Calu3 (cell line): ENCODE measurements at regions of chr9 and their contacts with region 1.

Region 1: GRCh38 chr9:132169672-132170392 is 8.0 kb downstream of the NTNG2 start:
- DNase-seq: peak; percentile 54
- H3K4me3 Mint-ChIP-seq: no peak overlapping the region
- H3K27ac Mint-ChIP-seq: no peak overlapping the region
- H3K4me1 Mint-ChIP-seq: no peaks in the 10 kb centered on the region
- H3K27me3 Mint-ChIP-seq: peaks cover 97% of the 10 kb centered on the region
- CTCF ChIP-seq: peak; percentile 82

Region 2: DNA sequence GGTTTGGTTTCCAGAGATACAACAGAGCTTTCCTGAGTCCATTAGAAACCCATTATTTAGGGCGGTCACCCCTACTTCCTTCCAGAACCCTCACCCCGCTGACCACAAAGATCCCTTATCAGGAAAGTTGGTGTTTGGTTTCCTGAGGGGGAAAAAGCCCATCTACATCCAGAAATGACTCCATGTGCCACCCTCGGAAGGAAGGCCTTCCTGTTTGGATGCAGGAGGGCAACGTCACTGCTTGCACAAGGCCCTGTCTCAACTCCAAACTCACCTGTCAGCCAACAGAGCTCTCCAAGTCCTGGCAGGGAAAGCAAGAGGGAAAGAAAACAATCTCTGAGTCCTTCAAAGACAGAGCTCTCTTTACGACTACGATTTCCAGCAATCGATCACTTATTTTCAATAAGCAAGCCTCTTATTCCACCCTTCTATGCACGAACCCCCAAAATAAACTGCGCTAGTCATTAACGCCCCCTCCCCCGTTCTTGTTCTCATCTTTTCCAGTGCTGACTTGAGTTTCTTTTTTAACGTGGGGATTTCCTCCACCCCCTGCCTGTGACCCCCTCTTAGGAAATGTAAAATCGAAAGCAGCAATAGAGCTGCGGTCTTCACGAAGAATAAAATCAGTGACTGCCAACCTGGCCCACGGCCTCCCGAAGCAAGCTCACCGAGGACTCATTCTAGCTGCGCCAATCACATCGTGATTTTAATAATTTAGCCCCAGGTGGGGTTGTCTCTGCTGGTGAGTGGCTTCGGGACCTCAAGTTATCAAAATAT is 43.7 kb before region 1 on chr9:
- CTCF ChIA-PET with region 1: no interaction called
- intact Hi-C with region 1: no loop called
- DNase-seq: no peak
- H3K4me3 Mint-ChIP-seq: no peak overlapping the region
- H3K27ac Mint-ChIP-seq: no peak overlapping the region
- H3K4me1 Mint-ChIP-seq: no peaks in the 10 kb centered on the region
- H3K27me3 Mint-ChIP-seq: peaks cover 100% of the 10 kb centered on the region
- CTCF ChIP-seq: no peak

Region 3: GRCh38 chr9:132235946-132236661 is 66.3 kb after region 1 on chr9:
- CTCF ChIA-PET with region 1: interaction called, 13 read pairs
- intact Hi-C with region 1: no loop called
- DNase-seq: peak; percentile 71
- H3K4me3 Mint-ChIP-seq: no peak overlapping the region
- H3K27ac Mint-ChIP-seq: no peak overlapping the region
- H3K4me1 Mint-ChIP-seq: peaks cover 6% of the 10 kb centered on the region
- H3K27me3 Mint-ChIP-seq: peaks cover 79% of the 10 kb centered on the region
- CTCF ChIP-seq: peak; percentile 73